ENCODE measurements at regions of chr5 and their contacts with region 1.

Region 1: GRCh38 chr5:159156426-159157238 is 52.7 kb downstream of the RNF145 start:
- DNase-seq: no peak

Region 2: GRCh38 chr5:159202151-159202550 is 45.5 kb after region 1 on chr5:
- intact Hi-C with region 1: loop called (anchors 2 kb)
- DNase-seq: no peak

Region 3: DNA sequence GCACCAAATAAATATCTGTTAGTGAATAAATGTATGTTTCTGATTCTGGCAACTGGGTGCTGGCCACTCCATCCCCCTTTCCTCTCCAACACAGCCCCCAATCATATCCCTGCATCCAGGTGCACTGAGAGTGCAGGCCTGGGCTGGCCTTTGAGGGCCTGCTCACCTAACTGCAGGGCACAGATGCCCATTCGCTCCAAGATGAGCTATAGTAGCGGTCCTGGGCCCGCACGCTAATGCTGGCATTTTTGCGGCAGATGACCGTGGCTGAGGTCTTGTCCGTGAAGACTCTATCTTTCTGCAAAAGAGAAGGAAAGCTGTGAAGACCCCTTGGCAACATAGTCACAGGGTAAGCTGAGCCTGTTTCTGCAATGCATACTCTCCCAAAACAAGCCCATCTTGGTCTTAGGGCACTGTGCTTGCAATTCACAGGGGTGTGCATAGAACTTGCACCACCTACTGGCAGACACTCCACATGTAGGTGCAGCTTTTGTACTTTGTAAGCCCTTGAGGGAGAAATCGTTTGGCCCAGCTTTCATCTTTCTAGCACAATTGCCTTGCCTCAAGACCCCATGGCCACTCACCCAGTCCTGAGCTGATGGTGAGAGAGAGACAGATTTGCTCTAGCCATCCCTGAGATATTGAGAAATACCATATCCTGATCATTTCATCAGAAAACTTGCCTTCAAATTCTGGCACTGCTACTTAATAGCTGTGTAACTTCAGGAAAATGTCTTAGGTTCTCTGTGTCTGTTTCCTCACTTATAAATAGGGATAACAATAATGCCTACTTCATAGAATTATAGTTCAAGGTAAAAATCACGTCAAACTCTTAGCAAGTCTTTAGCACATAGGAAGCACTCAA is 160.1 kb after region 1 on chr5:
- intact Hi-C with region 1: loop called (anchors 2 kb)
- DNase-seq: no peak